Vagina (tissue), 2 donors: ENCODE measurements at regions of chr18 and their contacts with region 1.

Region 1: DNA sequence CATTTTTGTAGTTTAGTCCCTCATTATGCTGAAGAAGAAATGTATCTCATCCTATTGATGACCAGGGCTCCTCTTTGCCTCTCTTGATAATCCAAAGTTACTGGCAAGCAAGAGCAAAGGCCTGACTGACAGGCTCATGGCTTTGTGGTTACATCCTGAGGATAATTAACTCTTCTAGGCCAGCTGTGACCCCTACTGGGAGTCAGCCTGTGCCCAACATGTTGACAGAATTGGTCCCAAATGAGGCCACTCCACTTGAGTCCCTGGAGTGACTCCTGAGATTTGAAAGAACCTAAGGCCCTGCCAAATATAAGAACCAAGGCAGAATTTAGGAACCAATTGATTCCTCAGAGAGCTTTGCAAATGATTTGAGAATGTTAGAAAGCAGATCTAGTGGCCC is 973.8 kb upstream of the CELF4 start:
- DNase-seq: no peak
- H3K4me3 ChIP-seq: no peak overlapping the region
- H3K27ac ChIP-seq: no peak overlapping the region
- H3K4me1 ChIP-seq: no peaks in the 10 kb centered on the region
- H3K27me3 ChIP-seq: no peaks in the 10 kb centered on the region
- CTCF ChIP-seq: no peak
- POLR2A ChIP-seq: no peak

Region 2: GRCh38 chr18:37499044-37499443 is 1040.3 kb before region 1 on chr18:
- intact Hi-C with region 1: loop called (anchors 10 kb)
- DNase-seq: no peak
- H3K4me3 ChIP-seq: no peak overlapping the region
- H3K27ac ChIP-seq: no peak overlapping the region
- H3K4me1 ChIP-seq: no peaks in the 10 kb centered on the region
- H3K27me3 ChIP-seq: no peaks in the 10 kb centered on the region
- CTCF ChIP-seq: no peak
- POLR2A ChIP-seq: no peak